H1 (cell line): ENCODE measurements at regions of chr19 and their contacts with region 1.

Region 1: GRCh38 chr19:18203863-18204393 is at the start of gene RAB3A:
- DNase-seq: peak; percentile 97 to 100
- H3K4me3 ChIP-seq: peak within 1 kb of the TSS; percentile 56 to 83 (median 78)
- H3K27ac ChIP-seq: peak within 1 kb of the TSS; percentile 76
- H3K4me1 ChIP-seq: peaks cover 0 to 11% (median 7%) of the 10 kb centered on the region in 4 experiments; a peak in 5 of 7 replicates
- H3K27me3 ChIP-seq: no peaks in the 10 kb centered on the region; a peak in 1 of 7 replicates
- CTCF ChIP-seq: peak in 2 of 3 experiments; percentile 14 to 20; a peak in 1 of 4 replicates
- EP300 ChIP-seq: no peak
- POLR2A ChIP-seq: no peak
- RAD21 ChIP-seq: no peak
- total RNA-seq, gene RAB3A: 14.2 and 14.3 TPM in 2 replicates

Region 2: DNA sequence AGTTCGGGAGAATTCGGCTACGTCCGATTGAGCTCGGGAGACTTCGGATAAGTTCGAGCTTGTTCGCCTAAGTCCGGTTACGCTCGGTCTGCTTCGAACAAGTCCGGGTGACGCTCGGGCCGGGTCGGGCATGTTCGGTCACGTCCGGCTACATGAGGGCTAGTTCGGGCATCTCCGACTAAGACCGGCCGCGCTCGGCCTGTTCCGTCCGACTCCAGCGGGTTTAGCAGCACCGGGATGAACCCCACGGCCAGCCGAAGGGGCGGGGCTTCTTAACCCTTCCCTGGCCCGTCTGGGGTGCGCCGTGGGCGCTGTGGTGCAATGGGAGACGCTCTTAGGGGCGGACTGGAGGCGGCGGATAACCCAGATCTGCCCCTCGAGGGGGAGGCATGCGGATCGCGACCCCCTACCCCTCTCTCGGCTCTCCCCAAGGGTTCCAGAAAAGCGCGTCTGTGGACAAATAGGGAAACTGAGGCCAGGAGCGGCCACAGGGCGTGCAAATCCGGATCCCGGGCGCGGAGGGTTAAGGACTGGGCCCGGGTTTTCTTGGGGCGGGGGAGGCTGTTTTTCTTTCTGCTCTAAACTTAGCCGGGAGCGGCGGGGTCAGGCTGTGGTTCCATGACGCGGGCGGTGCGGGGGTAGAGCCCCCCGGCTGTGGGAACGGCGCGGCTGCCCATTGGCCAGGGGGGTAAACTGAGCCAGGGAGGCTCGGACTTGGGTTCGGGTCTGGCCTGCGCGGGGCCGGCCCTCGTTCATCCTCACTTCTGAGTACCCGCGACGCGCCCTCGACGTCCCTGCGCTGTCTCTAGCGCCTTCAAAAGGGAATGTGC is 20.8 kb after region 1 on chr19:
- CTCF ChIA-PET with region 1: interaction called, 67 read pairs
- POLR2A ChIA-PET with region 1: interaction called, 59 read pairs
- DNase-seq: peak; percentile 99
- H3K4me3 ChIP-seq: peak overlapping the region; percentile 54 to 77 (median 68)
- H3K27ac ChIP-seq: peak overlapping the region; percentile 89
- H3K4me1 ChIP-seq: peaks cover 0 to 20% (median 16%) of the 10 kb centered on the region in 4 experiments; a peak in 6 of 7 replicates
- H3K27me3 ChIP-seq: peaks cover 10 to 23% (median 17%) of the 10 kb centered on the region in 4 experiments
- CTCF ChIP-seq: no peak
- EP300 ChIP-seq: no peak
- POLR2A ChIP-seq: no peak
- RAD21 ChIP-seq: no peak

Region 3: GRCh38 chr19:18233224-18233825 is 29.4 kb after region 1 on chr19:
- CTCF ChIA-PET with region 1: interaction called, 40 read pairs
- POLR2A ChIA-PET with region 1: interaction called, 15 read pairs
- DNase-seq: peak in 1 of 2 experiments; percentile 95
- H3K4me3 ChIP-seq: peak overlapping the region; percentile 11 to 54 (median 32); a peak in 7 of 8 replicates
- H3K27ac ChIP-seq: no peak overlapping the region
- H3K4me1 ChIP-seq: peaks cover 6 to 20% (median 14%) of the 10 kb centered on the region in 4 experiments
- H3K27me3 ChIP-seq: no peaks in the 10 kb centered on the region
- CTCF ChIP-seq: no peak
- EP300 ChIP-seq: peak in 1 of 2 experiments; percentile 18; a peak in 1 of 3 replicates
- POLR2A ChIP-seq: no peak
- RAD21 ChIP-seq: no peak